ENCODE measurements at regions of chr12 and their contacts with region 1.

Region 1: GRCh38 chr12:57111031-57111734 is at the start of gene STAT6:
- DNase-seq: peak; percentile 37

Region 2: DNA sequence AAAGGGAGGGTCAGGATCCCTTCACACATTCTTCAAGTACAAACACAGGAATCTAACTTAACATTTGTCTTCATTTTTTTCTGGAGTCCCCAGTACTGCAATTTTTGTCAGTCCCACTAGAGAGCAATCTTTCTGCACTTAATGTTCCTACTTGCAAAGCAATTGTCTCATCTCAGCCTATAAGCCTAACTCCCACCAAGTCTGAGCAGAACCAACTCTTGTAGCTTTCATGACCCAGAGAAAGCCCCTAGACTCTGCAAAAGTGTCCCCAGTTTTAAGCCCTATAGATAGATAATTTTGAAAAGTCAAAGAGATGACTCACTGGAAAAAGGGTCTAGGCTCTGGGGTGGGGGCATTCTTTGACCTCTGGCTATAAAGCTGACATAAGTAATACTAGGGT is 103.0 kb before region 1 on chr12:
- CTCF ChIA-PET with region 1: interaction called, 6 read pairs
- POLR2A ChIA-PET with region 1: interaction called, 13 read pairs
- DNase-seq: peak; percentile 65

Region 3: GRCh38 chr12:57040750-57041149 is 70.4 kb before region 1 on chr12:
- CTCF ChIA-PET with region 1: no interaction called
- POLR2A ChIA-PET with region 1: no interaction called
- DNase-seq: no peak

Region 4: DNA sequence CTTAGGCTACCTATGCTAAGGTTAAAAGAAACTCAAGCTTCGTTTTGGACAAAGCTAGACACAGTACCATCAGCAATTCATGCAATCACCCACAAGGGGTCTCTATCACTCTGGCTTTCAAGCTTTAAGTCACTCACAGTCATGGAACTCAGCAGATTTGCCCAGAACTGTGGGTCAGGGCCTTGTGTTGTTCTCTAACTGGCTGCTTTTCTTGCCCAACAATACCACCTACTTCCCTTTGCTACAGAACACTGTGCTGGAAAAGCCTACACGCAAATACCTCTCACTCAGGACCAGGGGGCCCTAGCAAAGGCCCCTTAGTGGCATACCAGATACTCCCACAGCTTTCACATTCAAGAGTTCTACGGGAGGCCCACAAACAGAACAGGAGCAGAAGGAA is 41.7 kb before region 1 on chr12:
- CTCF ChIA-PET with region 1: interaction called, 48 read pairs
- POLR2A ChIA-PET with region 1: interaction called, 46 read pairs
- DNase-seq: peak; percentile 56

Region 5: GRCh38 chr12:57088459-57089248 is 22.5 kb before region 1 on chr12 and contains the start of gene NAB2:
- CTCF ChIA-PET with region 1: interaction called, 21 read pairs
- POLR2A ChIA-PET with region 1: interaction called, 41 read pairs
- DNase-seq: peak; percentile 85

Region 6: GRCh38 chr12:57124259-57124877 is 13.2 kb after region 1 on chr12:
- CTCF ChIA-PET with region 1: interaction called, 19 read pairs
- POLR2A ChIA-PET with region 1: interaction called, 22 read pairs
- DNase-seq: peak; percentile 78

Region 7: GRCh38 chr12:57520053-57520871 is 409.1 kb after region 1 on chr12 and contains the start of gene DDIT3:
- CTCF ChIA-PET with region 1: no interaction called
- POLR2A ChIA-PET with region 1: no interaction called
- DNase-seq: peak; percentile 95

Measured in HEK293T (cell line).